K562 (cell line): ENCODE measurements at regions of chr12 and their contacts with region 1.

Region 1: GRCh38 chr12:108856428-108857157 is 790 bp downstream of the SSH1 start:
- DNase-seq: peak in 2 of 4 experiments; percentile 45 to 59
- ATAC-seq: peak; percentile 18
- H3K4me3 ChIP-seq: peak overlapping the region; percentile 46
- H3K27ac ChIP-seq: peak overlapping the region; percentile 67; the same call in 2 of the 3 replicates
- H3K4me1 ChIP-seq: peaks cover 33 to 44% of the 10 kb centered on the region in 2 experiments
- H3K27me3 ChIP-seq: peaks cover 0 to 6% of the 10 kb centered on the region in 2 experiments; a peak in 1 of 5 replicates
- CTCF ChIP-seq: no peak
- EP300 ChIP-seq: no peak
- POLR2A ChIP-seq: no peak
- RAD21 ChIP-seq: no peak

Region 2: DNA sequence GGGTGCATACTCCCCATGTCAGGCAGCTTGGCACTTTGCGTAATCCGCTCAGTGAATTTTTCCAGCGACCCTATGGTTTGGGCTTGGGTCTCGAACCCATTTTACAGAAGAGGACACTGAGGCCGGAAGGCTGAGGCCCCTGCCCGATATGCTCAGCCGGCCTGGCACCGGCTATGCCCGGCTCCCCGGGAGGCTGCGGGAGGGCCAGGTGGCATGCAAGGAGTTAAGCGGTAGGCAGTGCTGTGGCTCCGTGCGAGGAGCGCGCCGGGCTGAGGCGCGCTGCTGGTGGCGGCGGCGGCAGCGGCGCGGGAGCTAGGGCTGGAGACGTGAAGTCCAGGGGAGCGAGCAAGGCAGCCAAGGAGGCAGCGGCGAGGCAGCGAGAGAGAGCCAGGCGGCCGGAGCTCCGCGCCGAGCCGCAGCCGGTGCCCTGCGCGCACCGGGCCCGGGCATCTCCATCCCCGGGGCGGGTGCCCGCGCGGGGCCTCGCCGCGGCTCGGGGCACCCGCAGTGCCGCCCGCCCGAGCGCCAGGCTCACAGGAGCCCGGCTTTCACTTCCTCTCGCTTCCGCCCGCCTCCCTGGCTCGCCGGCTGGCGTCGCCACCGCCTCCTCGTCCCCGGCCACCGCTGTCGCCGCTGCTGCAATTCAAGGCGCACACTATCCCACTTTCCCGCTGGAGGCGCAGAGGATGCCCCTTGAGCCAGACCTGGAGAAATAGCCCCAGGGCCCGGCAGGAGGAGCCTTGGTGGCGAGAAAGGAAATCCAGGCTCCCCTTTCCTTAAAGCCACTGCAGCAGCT is 727.4 kb before region 1 on chr12 and contains the start of gene WSCD2:
- CTCF ChIA-PET with region 1: no interaction called
- POLR2A ChIA-PET with region 1: no interaction called
- in situ Hi-C with region 1: no loop called
- intact Hi-C with region 1: loop called (anchors 10 kb)
- DNase-seq: peak; percentile 52 to 80 (median 56)
- ATAC-seq: peak; percentile 91
- H3K4me3 ChIP-seq: peak within 1 kb of the TSS; percentile 56
- H3K27ac ChIP-seq: peak within 1 kb of the TSS; percentile 58; the same call in 2 of the 3 replicates
- H3K4me1 ChIP-seq: peaks cover 28 to 32% of the 10 kb centered on the region in 2 experiments
- H3K27me3 ChIP-seq: no peaks in the 10 kb centered on the region; a peak in 1 of 5 replicates
- CTCF ChIP-seq: peak; percentile 56 to 95 (median 84); a peak in 5 of 6 replicates
- EP300 ChIP-seq: no peak
- POLR2A ChIP-seq: peak; percentile 32; the same call in 1 of the 2 replicates
- RAD21 ChIP-seq: peak; percentile 57 to 69
- polyA plus RNA-seq, gene WSCD2: 0.72 to 0.89 TPM

Region 3: DNA sequence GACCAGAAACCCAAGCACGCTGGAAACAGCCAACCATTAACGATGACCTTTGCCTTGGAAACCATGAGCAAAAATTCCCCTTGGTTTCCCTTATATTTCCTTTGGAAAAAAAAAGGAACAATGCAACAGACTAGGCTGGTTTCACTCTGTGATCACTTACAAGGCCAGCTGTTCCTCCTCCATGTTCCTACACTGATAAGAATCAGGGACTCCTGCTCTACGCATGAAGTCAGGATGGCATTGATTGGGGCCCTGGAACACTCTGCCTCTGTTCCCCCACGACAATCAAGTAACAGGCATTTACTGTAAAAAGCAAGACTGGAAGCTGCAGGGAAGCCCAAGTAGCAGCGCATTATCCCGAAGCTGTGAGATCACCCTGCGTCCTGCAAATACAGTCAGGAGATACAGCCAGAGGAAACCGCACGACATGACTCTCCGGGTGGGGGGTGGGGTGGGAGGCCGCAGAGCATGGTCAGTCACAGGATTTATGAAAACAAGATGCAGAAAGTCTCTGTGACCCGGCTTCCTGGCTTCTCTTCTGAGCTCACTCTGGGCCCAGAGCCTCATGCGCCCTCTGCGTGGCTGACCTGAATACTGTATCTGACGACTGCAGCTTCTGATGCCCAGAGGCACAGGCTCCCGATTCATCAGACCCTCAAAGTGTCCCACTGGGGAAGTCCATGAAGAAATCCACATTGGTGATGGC is 30.3 kb before region 1 on chr12:
- CTCF ChIA-PET with region 1: no interaction called
- POLR2A ChIA-PET with region 1: no interaction called
- in situ Hi-C with region 1: no loop called
- intact Hi-C with region 1: loop called (anchors 5 kb)
- DNase-seq: peak in 3 of 4 experiments; percentile 47 to 60 (median 47)
- ATAC-seq: peak; percentile 35; the same call in 2 of the 3 replicates
- H3K4me3 ChIP-seq: no peak overlapping the region
- H3K27ac ChIP-seq: no peak overlapping the region
- H3K4me1 ChIP-seq: peaks cover 14 to 36% of the 10 kb centered on the region in 2 experiments; a peak in 4 of 5 replicates
- H3K27me3 ChIP-seq: peaks cover 2 to 6% of the 10 kb centered on the region in 2 experiments; a peak in 3 of 5 replicates
- CTCF ChIP-seq: no peak
- EP300 ChIP-seq: no peak
- POLR2A ChIP-seq: no peak
- RAD21 ChIP-seq: no peak

Region 4: DNA sequence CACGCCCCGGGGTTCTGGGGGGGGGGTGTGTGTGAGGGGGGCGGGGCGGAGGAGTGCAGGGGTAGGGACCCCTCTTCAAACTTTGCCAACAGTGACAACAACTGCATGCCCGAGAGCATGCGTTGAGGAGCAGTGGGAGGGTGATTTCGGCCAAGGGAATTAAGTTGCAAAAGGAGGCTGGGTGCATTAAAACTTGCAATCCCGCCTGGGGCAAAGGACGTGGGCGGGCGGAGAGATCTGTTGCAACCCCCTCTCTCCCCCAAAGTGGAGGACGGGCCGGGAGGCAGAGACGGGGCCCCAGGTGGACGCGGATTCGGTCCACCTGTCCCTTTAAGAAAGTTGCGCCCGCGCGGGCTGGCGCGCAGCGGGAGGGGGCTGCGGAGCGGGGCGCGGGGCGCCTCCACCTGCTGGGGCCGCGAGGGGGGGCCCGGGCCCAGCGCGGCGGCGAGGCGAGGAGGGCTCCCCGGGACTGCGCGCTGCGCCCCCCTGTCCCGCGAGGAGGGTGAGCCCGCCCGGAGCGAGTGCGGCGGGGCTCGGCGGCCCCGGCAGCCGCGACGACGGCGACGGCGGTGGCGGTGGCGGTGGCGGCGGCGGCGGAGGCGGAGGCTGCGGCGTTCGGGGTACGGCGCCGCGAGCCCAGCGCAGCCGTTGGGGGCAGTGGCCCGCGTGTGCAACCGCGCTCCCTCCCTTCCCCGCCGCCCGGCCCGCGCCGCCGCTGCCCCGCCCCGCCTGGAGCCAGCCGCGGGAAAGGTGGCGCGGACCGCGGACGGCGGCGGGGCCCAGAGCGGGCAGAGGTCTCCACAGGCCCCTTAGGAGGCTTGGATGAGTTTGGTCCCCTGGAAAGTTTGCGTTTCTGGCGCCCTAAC is 453.0 kb after region 1 on chr12:
- CTCF ChIA-PET with region 1: no interaction called
- POLR2A ChIA-PET with region 1: no interaction called
- in situ Hi-C with region 1: no loop called
- intact Hi-C with region 1: no loop called
- DNase-seq: peak in 2 of 4 experiments; percentile 60 to 66
- ATAC-seq: peak; percentile 70
- H3K4me3 ChIP-seq: no peak overlapping the region; the same call in 1 of the 2 replicates
- H3K27ac ChIP-seq: no peak overlapping the region
- H3K4me1 ChIP-seq: peaks cover 5 to 13% of the 10 kb centered on the region in 2 experiments; a peak in 3 of 5 replicates
- H3K27me3 ChIP-seq: peaks cover 46 to 57% of the 10 kb centered on the region in 2 experiments
- CTCF ChIP-seq: no peak
- EP300 ChIP-seq: no peak
- POLR2A ChIP-seq: no peak
- RAD21 ChIP-seq: no peak